Sciatic nerve (tissue), 2 donors: ENCODE measurements at regions of chr2 and their contacts with region 1.

Region 1: DNA sequence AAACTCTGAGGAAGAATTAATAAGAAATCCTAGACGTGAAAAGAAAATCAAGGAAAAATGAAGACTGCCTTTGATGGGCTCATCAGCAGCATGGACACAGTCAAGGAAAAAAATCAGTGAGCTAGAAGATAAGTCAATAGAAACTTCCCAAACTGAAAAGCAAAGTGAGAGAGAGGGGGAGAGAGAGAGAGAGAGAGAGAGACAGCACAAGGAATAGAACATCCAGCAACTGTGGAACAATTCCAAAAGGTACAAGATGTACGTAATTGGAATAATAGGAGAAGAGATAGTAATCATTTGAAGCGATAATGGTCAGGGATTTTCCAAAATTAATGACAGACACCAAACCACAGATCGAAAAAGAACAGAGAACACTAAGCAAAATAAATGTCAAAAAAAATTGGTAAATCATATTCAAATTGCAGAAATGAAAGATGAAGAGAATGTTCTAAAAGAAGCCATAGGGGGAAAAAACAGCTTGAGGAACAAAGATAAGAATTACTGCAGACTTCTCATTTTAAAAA is 54.5 kb downstream of the TBC1D8 start:
- DNase-seq: no peak
- ATAC-seq: no peak

Region 2: GRCh38 chr2:101057051-101057933 is 39.4 kb before region 1 on chr2:
- intact Hi-C with region 1: no loop called
- DNase-seq: no peak
- ATAC-seq: no peak

Region 3: GRCh38 chr2:101151141-101151858 is 54.6 kb after region 1 on chr2 and contains the start of gene TBC1D8:
- intact Hi-C with region 1: no loop called
- DNase-seq: peak; percentile 93
- ATAC-seq: peak; percentile 94
- total RNA-seq, gene TBC1D8: 20.1 TPM

Region 4: GRCh38 chr2:101806123-101806522 is 709.4 kb after region 1 on chr2:
- intact Hi-C with region 1: no loop called
- DNase-seq: no peak
- ATAC-seq: no peak

Region 5: GRCh38 chr2:102487761-102488466 is 1391.2 kb after region 1 on chr2:
- intact Hi-C with region 1: loop called (anchors 5 kb)
- DNase-seq: no peak
- ATAC-seq: no peak